ENCODE measurements at regions of chr2 and their contacts with region 1.

Region 1: GRCh38 chr2:137838255-137839092 is 125.8 kb upstream of the HNMT start:
- DNase-seq: no peak
- H3K4me3 ChIP-seq: no peak overlapping the region
- H3K27ac ChIP-seq: no peak overlapping the region
- H3K4me1 ChIP-seq: no peaks in the 10 kb centered on the region
- H3K27me3 ChIP-seq: no peaks in the 10 kb centered on the region
- CTCF ChIP-seq: peak; percentile 32 to 71 (median 48)

Region 2: DNA sequence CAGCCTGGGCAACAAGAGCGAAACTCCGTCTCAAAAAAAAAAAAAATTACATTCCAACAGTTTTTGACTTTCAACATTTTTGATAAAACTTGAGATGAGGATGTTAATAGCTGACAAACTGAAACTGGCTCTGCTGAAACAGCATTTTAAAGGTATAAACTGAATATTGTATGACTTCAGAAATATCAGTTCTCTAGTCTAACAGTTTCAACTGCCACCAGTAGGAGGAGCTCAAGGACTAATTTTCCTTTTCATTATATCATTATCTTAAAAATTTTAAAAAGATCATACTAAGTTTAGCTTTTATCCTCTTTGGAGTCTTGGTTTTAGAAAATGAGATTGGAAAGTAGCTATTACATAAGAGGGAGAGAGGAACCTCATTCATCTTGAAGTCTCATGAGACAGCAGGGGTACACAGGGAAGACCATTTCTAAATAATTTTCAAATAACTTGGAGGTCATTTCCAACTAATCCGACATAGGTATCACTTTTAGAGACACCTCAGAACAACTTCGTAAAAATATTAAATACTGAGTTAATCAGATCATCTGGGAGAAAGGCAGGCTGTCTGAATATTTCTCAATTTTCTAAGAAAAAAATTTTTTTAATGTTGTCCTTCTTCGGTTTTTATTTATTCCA is 1924.6 kb before region 1 on chr2:
- intact Hi-C with region 1: loop called (anchors 5 kb)
- DNase-seq: no peak
- H3K4me3 ChIP-seq: no peak overlapping the region
- H3K27ac ChIP-seq: no peak overlapping the region
- H3K4me1 ChIP-seq: no peaks in the 10 kb centered on the region
- H3K27me3 ChIP-seq: no peaks in the 10 kb centered on the region
- CTCF ChIP-seq: peak; percentile 32 to 83 (median 69)

Region 3: DNA sequence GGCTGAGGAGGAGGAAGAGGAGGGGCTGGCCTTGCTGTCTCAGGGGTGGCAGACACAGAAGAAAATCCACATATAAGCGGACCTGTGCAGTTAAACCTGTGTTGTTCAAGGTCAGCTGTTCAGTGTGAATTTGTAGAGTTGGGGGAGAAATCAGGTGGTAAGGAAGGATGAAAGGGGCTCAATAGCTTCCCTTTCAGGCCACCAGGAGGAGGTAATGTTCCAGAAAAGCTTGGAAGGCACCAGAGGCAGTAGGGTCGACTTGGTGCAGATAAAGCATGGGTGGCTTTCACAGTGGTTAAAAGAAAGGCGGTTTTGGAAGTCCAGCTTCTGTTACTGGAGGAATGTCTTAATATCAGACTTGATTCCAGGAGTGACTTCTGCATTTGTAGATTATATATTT is 905.8 kb before region 1 on chr2:
- intact Hi-C with region 1: loop called (anchors 5 kb)
- DNase-seq: no peak
- H3K4me3 ChIP-seq: no peak overlapping the region
- H3K27ac ChIP-seq: no peak overlapping the region
- H3K4me1 ChIP-seq: no peaks in the 10 kb centered on the region
- H3K27me3 ChIP-seq: no peaks in the 10 kb centered on the region
- CTCF ChIP-seq: no peak

Measured in ascending aorta (tissue), 2 donors.